GM12878 (cell line): ENCODE measurements at regions of chr19 and their contacts with region 1.

Region 1: GRCh38 chr19:48203732-48204628 is 33.5 kb downstream of the ZSWIM9 start:
- DNase-seq: peak; percentile 91
- ATAC-seq: peak; percentile 100
- H3K4me3 ChIP-seq: peak overlapping the region; percentile 87
- H3K27ac ChIP-seq: peak overlapping the region; percentile 71
- H3K4me1 ChIP-seq: peaks cover 3% of the 10 kb centered on the region; the same call in 1 of the 2 replicates
- H3K27me3 ChIP-seq: no peaks in the 10 kb centered on the region
- CTCF ChIP-seq: no peak
- EP300 ChIP-seq: no peak
- POLR2A ChIP-seq: peak; percentile 92
- RAD21 ChIP-seq: no peak

Region 2: DNA sequence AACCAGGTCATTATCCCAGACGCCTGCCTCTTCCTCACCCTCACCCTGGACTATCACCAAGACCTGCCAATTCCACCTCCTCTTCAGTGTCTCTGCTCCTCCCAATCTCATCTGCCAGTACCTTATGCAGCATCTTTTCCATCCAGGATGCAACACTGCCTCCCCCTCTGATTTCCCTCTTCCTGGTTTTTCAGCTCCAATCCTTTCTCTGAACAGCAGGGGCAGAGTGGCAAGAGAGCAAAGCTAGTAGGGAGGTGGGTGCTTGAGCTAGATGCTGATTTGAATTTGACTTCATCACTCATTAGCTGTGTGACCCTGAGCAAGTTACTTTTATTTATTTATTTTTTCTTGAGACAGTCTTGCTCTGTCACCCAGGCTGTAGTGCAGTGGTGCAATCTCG is 134.5 kb before region 1 on chr19:
- CTCF ChIA-PET with region 1: no interaction called
- POLR2A ChIA-PET with region 1: no interaction called
- RAD21 ChIA-PET with region 1: no interaction called
- SMC1A ChIA-PET with region 1: no interaction called
- in situ Hi-C with region 1: no loop called
- intact Hi-C with region 1: no loop called
- DNase-seq: no peak
- ATAC-seq: no peak
- H3K4me3 ChIP-seq: no peak overlapping the region
- H3K27ac ChIP-seq: no peak overlapping the region
- H3K4me1 ChIP-seq: no peaks in the 10 kb centered on the region
- H3K27me3 ChIP-seq: no peaks in the 10 kb centered on the region
- CTCF ChIP-seq: no peak
- EP300 ChIP-seq: no peak
- POLR2A ChIP-seq: no peak
- RAD21 ChIP-seq: no peak

Region 3: DNA sequence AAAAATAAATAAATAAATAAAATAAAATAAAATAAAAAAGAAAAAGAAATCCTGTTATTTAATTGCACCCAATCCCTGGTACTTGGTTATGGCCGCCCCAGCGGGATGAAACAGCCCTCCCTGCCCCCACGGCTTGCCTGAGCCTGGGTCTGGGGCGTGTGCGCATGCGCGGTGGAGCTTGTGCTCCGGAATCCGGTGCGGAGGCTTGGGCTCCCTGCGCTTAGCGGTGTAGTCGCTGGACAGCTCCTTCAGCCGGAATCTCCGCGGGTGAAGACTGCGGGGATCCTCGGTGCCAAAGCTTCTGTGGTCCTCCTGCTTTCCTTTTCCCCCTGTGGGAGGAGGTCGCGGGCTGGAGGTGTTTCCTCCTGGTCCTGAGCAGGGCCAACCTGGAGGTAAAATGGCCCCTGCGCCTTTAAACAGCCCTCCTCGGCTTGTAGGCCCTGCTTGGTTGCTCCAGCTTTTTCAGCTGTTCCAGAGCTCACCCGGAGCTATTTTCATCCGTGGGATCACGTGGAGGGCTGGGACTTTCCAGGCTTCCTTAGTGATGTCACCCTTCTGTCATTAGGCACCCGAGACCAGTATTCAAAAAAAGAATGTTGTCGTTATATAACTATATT is 93.5 kb before region 1 on chr19 and contains the start of gene PLA2G4C:
- CTCF ChIA-PET with region 1: interaction called, 11 read pairs
- POLR2A ChIA-PET with region 1: interaction called, 7 read pairs
- RAD21 ChIA-PET with region 1: interaction called, 14 read pairs
- SMC1A ChIA-PET with region 1: interaction called, 7 read pairs
- in situ Hi-C with region 1: no loop called
- intact Hi-C with region 1: no loop called
- DNase-seq: peak; percentile 48
- ATAC-seq: peak; percentile 86
- H3K4me3 ChIP-seq: peak within 1 kb of the TSS; percentile 83; the same call in 1 of the 2 replicates
- H3K27ac ChIP-seq: peak within 1 kb of the TSS; percentile 62
- H3K4me1 ChIP-seq: peaks cover 7% of the 10 kb centered on the region
- H3K27me3 ChIP-seq: no peaks in the 10 kb centered on the region
- CTCF ChIP-seq: no peak
- EP300 ChIP-seq: 0 out of 4 replicates have a peak, but pooled peaks of 1 of the 2 experiments have one; percentile 14
- POLR2A ChIP-seq: peak; percentile 86
- RAD21 ChIP-seq: no peak
- polyA plus RNA-seq, gene PLA2G4C: 0.53 to 0.64 TPM

Region 4: GRCh38 chr19:48186541-48186991 is 17.4 kb before region 1 on chr19:
- CTCF ChIA-PET with region 1: interaction called, 9 read pairs
- POLR2A ChIA-PET with region 1: interaction called, 14 read pairs
- RAD21 ChIA-PET with region 1: interaction called, 16 read pairs
- SMC1A ChIA-PET with region 1: interaction called, 13 read pairs
- in situ Hi-C with region 1: no loop called
- intact Hi-C with region 1: no loop called
- DNase-seq: no peak
- ATAC-seq: peak; percentile 86
- H3K4me3 ChIP-seq: no peak overlapping the region
- H3K27ac ChIP-seq: peak overlapping the region; percentile 52
- H3K4me1 ChIP-seq: peaks cover 12% of the 10 kb centered on the region
- H3K27me3 ChIP-seq: no peaks in the 10 kb centered on the region
- CTCF ChIP-seq: no peak
- EP300 ChIP-seq: no peak
- POLR2A ChIP-seq: no peak
- RAD21 ChIP-seq: no peak

Region 5: GRCh38 chr19:48244281-48244680 is 40.3 kb after region 1 on chr19:
- CTCF ChIA-PET with region 1: interaction called, 13 read pairs
- POLR2A ChIA-PET with region 1: interaction called, 17 read pairs
- RAD21 ChIA-PET with region 1: interaction called, 12 read pairs
- SMC1A ChIA-PET with region 1: interaction called, 10 read pairs
- in situ Hi-C with region 1: no loop called
- intact Hi-C with region 1: loop called (anchors 5 kb)
- DNase-seq: no peak
- ATAC-seq: peak; percentile 67
- H3K4me3 ChIP-seq: no peak overlapping the region
- H3K27ac ChIP-seq: no peak overlapping the region; the same call in 1 of the 2 replicates
- H3K4me1 ChIP-seq: peaks cover 8% of the 10 kb centered on the region
- H3K27me3 ChIP-seq: no peaks in the 10 kb centered on the region
- CTCF ChIP-seq: no peak
- EP300 ChIP-seq: no peak
- POLR2A ChIP-seq: no peak
- RAD21 ChIP-seq: no peak

Region 6: GRCh38 chr19:48255376-48256303 is 51.7 kb after region 1 on chr19 and contains the start of gene CARD8:
- CTCF ChIA-PET with region 1: interaction called, 48 read pairs
- POLR2A ChIA-PET with region 1: interaction called, 17 read pairs
- RAD21 ChIA-PET with region 1: interaction called, 30 read pairs
- SMC1A ChIA-PET with region 1: interaction called, 67 read pairs
- in situ Hi-C with region 1: no loop called
- intact Hi-C with region 1: loop called (anchors 5 kb)
- DNase-seq: peak; percentile 88
- ATAC-seq: peak; percentile 82
- H3K4me3 ChIP-seq: peak within 1 kb of the TSS; percentile 82
- H3K27ac ChIP-seq: peak within 1 kb of the TSS; percentile 96
- H3K4me1 ChIP-seq: peaks cover 13% of the 10 kb centered on the region
- H3K27me3 ChIP-seq: no peaks in the 10 kb centered on the region
- CTCF ChIP-seq: no peak; a peak in 1 of 6 replicates
- EP300 ChIP-seq: 0 out of 4 replicates have a peak, but pooled peaks of 1 of the 2 experiments have one; percentile 14
- POLR2A ChIP-seq: peak; percentile 81
- RAD21 ChIP-seq: no peak
- polyA plus RNA-seq, gene CARD8: 41.7 to 44.0 TPM